Activated CD4-positive, alpha-beta memory T cell treated with anti-CD3 and anti-CD28 coated beads, Interleukin-2, amount 10 ng/mL, durations not matched to agents 7 days and 5 days (primary cell): ENCODE measurements at regions of chr7 and their contacts with region 1.

Region 1: GRCh38 chr7:140175221-140176121 is 1.3 kb downstream of the KDM7A start:
- DNase-seq: peak; percentile 96
- H3K4me3 Mint-ChIP-seq: peak overlapping the region; percentile 84
- H3K27ac Mint-ChIP-seq: peak overlapping the region; percentile 89
- H3K4me1 Mint-ChIP-seq: peaks cover 51% of the 10 kb centered on the region
- H3K27me3 Mint-ChIP-seq: peaks cover 14% of the 10 kb centered on the region

Region 2: DNA sequence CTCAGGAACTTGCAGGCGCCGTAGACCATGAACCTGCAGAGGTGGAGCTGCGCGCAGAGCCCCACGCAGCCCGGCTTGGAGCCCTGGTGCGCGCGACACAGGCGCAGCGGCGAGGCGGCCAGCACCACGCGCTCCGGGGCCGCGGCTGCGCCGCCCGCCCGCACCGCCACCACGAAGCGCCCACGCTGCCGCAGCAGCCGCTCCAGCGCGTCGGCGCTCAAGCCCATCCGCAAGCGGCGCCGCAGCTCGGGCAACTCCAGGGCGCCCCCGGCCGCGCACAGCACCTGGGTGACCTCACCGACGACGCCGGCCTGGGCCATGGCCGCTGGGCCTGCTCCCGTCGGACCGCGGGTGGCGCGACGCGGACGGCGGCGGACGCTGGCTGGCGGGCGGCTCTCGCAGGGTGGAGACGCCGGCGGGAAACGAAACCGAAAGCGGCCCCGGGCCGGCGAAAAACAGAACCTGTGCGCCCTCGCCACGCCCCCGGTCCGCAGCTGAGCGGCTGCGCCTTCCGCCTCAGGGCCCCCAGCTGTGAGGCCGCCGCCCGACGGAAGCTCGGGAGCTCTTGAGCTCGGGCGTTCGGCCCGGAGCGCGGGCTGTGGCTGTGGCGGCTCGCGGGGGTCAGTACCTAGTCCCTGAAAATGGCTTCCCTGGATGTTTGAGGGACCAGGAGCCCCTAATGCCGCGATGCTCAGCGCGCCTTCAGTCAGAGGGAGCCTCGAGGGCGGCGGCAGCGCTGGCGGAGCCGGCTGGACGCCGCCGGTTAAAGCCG is 112.8 kb before region 1 on chr7 and contains the start of gene PARP12:
- CTCF ChIA-PET with region 1: interaction called, 5 read pairs
- POLR2A ChIA-PET with region 1: interaction called, 10 read pairs
- DNase-seq: peak; percentile 93
- H3K4me3 Mint-ChIP-seq: peak within 1 kb of the TSS; percentile 80
- H3K27ac Mint-ChIP-seq: peak within 1 kb of the TSS; percentile 82
- H3K4me1 Mint-ChIP-seq: peaks cover 48% of the 10 kb centered on the region
- H3K27me3 Mint-ChIP-seq: peaks cover 5% of the 10 kb centered on the region
- total RNA-seq, gene PARP12: 146 to 151 TPM

Region 3: DNA sequence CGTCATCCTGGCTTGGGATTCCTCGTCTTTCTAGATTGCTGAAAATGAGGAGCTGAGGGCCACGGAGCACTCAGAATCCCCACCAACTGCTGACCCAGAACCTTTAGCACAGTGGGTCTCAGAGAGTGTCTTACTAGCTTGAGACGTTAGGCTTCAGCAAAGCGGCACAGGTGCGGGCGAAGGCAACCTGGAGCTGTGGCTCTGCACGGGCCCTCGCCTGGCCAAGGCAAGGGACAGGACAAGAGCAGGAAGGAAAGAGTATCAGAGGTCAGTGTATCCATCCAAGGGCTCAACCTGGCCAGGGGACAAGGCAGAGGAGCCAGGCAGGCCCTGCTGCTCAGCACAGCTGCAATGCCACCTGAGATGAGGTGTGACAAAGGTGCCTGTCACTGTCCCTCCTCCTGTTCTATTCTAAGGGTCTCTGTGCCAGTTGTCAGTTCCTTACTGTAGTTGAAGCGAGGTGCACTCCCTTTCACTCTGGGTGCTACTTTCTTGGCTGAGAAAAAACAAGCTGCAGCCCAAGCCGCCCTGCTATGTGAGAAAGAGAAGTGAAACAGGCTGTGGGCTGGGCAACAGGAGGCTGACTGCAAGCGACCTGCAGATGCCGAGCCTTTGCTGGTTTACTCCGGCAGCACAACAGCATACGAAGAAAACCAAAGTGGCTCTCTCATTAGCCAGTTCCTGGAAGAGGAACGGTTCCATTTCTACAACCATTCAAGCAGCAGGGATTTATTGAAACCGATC is 34.6 kb after region 1 on chr7:
- CTCF ChIA-PET with region 1: interaction called, 3 read pairs
- POLR2A ChIA-PET with region 1: interaction called, 170 read pairs
- DNase-seq: peak; percentile 80
- H3K4me3 Mint-ChIP-seq: peak overlapping the region; percentile 58
- H3K27ac Mint-ChIP-seq: peak overlapping the region; percentile 94
- H3K4me1 Mint-ChIP-seq: peaks cover 90% of the 10 kb centered on the region
- H3K27me3 Mint-ChIP-seq: no peaks in the 10 kb centered on the region

Region 4: DNA sequence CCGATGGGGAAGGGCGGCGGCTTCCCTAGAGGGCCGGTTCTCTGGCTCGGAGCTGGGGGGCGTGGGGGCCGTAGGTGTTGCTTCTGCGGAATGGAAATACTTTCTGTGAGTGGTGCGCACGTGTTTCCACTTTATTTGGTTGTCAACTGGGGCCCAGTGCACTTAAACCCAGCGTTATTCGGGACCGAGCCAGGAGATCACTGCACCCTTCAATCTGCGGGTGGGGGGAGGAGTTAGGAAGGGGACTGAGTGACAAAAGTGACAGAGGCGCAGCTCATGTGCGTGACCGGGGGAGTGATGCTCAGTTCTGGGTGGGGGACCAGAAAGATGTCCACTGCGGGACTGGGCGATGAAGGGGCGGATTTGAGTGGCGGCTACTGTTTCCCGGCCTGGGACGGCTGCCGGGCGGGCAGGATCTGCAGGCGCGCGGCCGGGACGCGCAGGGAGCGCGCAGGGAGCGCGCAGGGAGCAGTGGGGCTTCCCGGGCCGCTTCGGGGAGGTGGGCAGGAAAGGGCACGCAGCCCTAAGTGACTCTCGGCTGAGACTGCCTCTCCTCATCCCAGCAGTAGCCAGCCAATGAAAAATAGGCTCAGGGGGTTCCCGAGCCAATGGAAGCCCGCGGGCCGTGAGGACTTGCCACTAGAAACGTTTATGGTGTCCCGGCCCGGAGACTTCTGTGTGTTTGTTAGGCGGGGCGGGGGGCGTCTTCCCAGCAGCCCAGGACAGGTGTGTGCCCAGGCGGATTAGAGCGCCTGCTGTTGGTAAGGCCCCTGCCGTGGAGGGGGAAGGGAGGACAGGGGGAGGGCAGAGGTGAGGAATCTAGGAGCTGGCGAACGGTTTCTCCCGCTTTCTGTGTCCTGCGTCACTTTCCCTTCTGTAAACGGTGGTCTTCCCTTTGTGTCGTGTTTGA is 55.6 kb after region 1 on chr7:
- CTCF ChIA-PET with region 1: interaction called, 8 read pairs
- POLR2A ChIA-PET with region 1: interaction called, 178 read pairs
- DNase-seq: peak; percentile 67
- H3K4me3 Mint-ChIP-seq: peak overlapping the region; percentile 90
- H3K27ac Mint-ChIP-seq: peak overlapping the region; percentile 92
- H3K4me1 Mint-ChIP-seq: peaks cover 51% of the 10 kb centered on the region
- H3K27me3 Mint-ChIP-seq: no peaks in the 10 kb centered on the region

Region 5: GRCh38 chr7:140249036-140249806 is 73.8 kb after region 1 on chr7:
- CTCF ChIA-PET with region 1: interaction called, 14 read pairs
- POLR2A ChIA-PET with region 1: interaction called, 92 read pairs
- DNase-seq: no peak
- H3K4me3 Mint-ChIP-seq: no peak overlapping the region
- H3K27ac Mint-ChIP-seq: no peak overlapping the region
- H3K4me1 Mint-ChIP-seq: peaks cover 31% of the 10 kb centered on the region
- H3K27me3 Mint-ChIP-seq: no peaks in the 10 kb centered on the region

Region 6: DNA sequence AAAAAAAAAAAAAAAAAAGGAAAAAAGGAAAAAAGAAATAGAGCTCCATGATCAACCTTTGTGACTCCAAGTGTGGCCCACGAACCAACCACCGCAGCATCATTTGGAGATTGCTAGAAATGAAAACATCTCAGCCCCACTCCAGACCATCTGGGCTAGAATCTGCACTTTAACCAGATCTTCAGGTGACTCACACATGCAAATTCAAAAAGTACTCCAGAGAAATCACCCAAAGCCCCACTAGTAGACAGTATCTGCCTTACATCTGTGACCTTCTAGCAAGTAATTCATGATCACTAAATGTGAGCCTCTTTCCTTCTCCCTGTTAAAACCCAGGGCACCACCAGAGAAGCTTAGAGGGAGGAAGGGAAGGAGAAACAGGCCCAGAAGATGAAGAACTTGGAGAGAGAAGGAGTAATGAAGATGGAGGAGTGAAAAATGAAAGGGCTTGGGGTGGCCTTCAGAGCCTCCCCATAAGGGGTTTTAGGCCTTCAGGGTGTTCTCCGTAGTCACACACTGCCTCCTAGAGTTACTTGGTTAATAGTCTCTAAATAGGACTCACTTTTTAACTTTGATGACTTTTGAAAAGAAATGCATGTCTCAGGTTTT is 128.8 kb after region 1 on chr7:
- CTCF ChIA-PET with region 1: interaction called, 10 read pairs
- POLR2A ChIA-PET with region 1: interaction called, 19 read pairs
- DNase-seq: peak; percentile 56
- H3K4me3 Mint-ChIP-seq: no peak overlapping the region
- H3K27ac Mint-ChIP-seq: peak overlapping the region; percentile 74
- H3K4me1 Mint-ChIP-seq: peaks cover 20% of the 10 kb centered on the region
- H3K27me3 Mint-ChIP-seq: no peaks in the 10 kb centered on the region